Activated CD4-positive, alpha-beta T cell treated with anti-CD3 and anti-CD28 coated beads, Interleukin-2, amount 10 ng/mL, durations not matched to agents 24 days and 14 days (primary cell): ENCODE measurements at regions of chr2 and their contacts with region 1.

Region 1: GRCh38 chr2:230602562-230603230 is 109.9 kb upstream of the CAB39 start:
- DNase-seq: peak; percentile 84
- H3K4me3 Mint-ChIP-seq: peak overlapping the region; percentile 50
- H3K27ac Mint-ChIP-seq: peak overlapping the region; percentile 88
- H3K4me1 Mint-ChIP-seq: peaks cover 49% of the 10 kb centered on the region
- H3K27me3 Mint-ChIP-seq: no peaks in the 10 kb centered on the region

Region 2: DNA sequence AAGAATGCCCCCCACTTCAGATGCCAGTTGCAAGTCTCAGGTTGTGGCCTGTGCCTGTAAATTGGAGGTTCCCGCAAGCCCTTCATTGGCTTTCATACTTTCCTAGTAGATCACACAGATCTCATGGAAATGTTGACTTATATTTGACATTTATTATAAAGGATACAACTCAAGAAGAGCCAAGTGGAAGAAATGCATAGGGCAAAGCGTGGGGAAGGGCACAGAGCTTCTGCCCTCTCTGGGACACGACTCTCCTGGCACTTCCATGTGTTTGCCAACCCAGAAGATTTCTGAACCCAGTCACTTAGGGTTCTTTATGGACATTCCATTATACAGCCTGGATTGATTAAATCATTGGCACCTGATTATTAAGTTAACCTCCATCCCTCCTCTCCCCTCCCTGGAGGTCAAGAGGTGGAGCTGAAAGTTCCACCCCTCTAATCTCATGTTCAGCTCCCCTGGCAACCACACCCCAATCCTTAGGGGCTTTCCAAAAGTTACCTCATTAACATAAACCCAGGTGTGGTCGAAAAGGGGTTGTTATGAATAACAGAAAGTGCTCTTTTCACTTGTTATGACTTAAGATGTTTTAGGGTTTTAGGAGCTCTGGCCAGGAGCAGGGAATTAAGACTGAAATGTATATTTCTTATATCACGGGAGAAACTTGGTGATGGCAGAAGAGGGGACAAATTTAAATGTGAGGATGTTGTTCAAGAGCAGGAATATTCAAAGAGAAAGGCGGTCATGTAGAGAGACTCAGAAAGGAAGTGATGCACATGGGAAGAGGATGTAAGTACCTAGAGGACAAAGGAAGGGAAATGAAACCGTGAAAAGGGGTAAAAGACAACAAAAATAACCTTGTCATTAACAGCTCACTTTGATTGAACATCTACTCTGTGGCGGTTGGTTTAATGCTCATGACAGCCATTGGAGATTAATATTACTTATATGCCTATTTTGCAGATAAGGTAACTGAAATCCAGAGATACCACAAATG is 154.9 kb before region 1 on chr2:
- intact Hi-C with region 1: loop called (anchors 5 kb)
- DNase-seq: peak; percentile 82
- H3K4me3 Mint-ChIP-seq: peak overlapping the region; percentile 59
- H3K27ac Mint-ChIP-seq: peak overlapping the region; percentile 87
- H3K4me1 Mint-ChIP-seq: peaks cover 55% of the 10 kb centered on the region
- H3K27me3 Mint-ChIP-seq: no peaks in the 10 kb centered on the region

Region 3: GRCh38 chr2:230636684-230637271 is 34.1 kb after region 1 on chr2:
- intact Hi-C with region 1: no loop called
- DNase-seq: peak; percentile 67
- H3K4me3 Mint-ChIP-seq: no peak overlapping the region
- H3K27ac Mint-ChIP-seq: peak overlapping the region; percentile 85
- H3K4me1 Mint-ChIP-seq: peaks cover 15% of the 10 kb centered on the region
- H3K27me3 Mint-ChIP-seq: no peaks in the 10 kb centered on the region

Region 4: GRCh38 chr2:230694241-230694640 is 91.5 kb after region 1 on chr2:
- intact Hi-C with region 1: no loop called
- DNase-seq: peak; percentile 81
- H3K4me3 Mint-ChIP-seq: peak overlapping the region; percentile 39
- H3K27ac Mint-ChIP-seq: peak overlapping the region; percentile 58
- H3K4me1 Mint-ChIP-seq: peaks cover 26% of the 10 kb centered on the region
- H3K27me3 Mint-ChIP-seq: no peaks in the 10 kb centered on the region

Region 5: GRCh38 chr2:231463698-231464575 is 861.2 kb after region 1 on chr2 and contains the start of gene NCL:
- intact Hi-C with region 1: no loop called
- DNase-seq: peak; percentile 95
- H3K4me3 Mint-ChIP-seq: peak within 1 kb of the TSS; percentile 93
- H3K27ac Mint-ChIP-seq: peak within 1 kb of the TSS; percentile 100
- H3K4me1 Mint-ChIP-seq: peaks cover 34% of the 10 kb centered on the region
- H3K27me3 Mint-ChIP-seq: no peaks in the 10 kb centered on the region
- total RNA-seq, gene NCL: 1,513 and 1,560 TPM in 2 replicates